Heart left ventricle (tissue), 16 donors: ENCODE measurements at regions of chr13 and their contacts with region 1.

Region 1: GRCh38 chr13:101109005-101109404 is 307.3 kb downstream of the NALCN start:
- DNase-seq: no peak
- ATAC-seq: no peak
- H3K4me3 ChIP-seq: no peak overlapping the region
- H3K27ac ChIP-seq: no peak overlapping the region
- H3K4me1 ChIP-seq: no peaks in the 10 kb centered on the region
- H3K27me3 ChIP-seq: no peaks in the 10 kb centered on the region
- CTCF ChIP-seq: no peak
- POLR2A ChIP-seq: no peak

Region 2: GRCh38 chr13:99661791-99662190 is 1447.2 kb before region 1 on chr13:
- intact Hi-C with region 1: loop called in 4 of 10 experiments (anchors 10 kb)
- DNase-seq: no peak
- ATAC-seq: no peak
- H3K4me3 ChIP-seq: no peak overlapping the region
- H3K27ac ChIP-seq: no peak overlapping the region
- H3K4me1 ChIP-seq: peaks cover 0 to 23% (median 8%) of the 10 kb centered on the region in 12 donors
- H3K27me3 ChIP-seq: peaks cover 0 to 10% (median 0%) of the 10 kb centered on the region in 9 donors
- CTCF ChIP-seq: no peak
- POLR2A ChIP-seq: no peak

Region 3: DNA sequence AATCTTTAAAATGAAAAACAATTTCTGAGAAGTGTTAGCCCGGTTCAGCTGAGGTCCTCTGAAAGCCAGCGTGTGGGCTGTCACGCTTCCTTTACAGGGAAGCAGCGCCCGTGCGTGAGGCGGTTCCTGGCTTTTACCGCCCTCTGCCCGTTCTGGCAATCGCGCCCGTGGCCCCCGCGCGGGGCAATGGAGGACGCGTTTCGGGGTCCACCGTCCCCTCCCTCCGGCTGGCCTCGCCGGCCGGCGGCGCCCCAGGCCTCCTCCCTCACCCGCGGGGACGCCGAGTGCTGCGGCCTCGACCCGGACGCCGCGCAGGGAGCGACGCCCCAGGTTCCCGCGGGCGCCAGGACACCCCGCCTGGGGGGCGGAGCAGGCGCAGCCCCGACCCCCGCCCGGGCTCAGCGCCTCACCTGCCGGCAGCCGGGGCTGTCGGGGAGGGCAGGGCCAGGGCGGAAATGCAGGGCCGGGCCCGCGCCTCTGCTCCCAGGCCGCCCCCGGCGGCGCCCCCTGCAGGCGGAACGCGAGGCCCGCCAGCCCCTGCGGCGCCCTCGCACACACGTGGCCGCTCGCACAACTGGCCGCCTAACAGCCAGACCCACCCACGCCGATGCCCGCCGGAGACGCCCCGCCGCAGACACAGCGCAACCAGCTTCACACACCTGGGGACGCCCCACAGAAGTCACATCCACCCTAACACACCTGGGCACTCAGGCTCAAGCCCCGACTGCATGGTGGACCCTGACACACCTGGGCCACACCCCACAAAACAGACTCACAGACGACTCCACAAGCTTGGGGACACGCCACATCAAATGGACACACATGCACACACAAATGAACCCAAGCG is 520.5 kb before region 1 on chr13 and contains the start of gene GGACT:
- intact Hi-C with region 1: loop called in 1 of 10 experiments (anchors 5 kb)
- DNase-seq: peak; percentile 66 to 90 (median 72)
- ATAC-seq: peak; percentile 73 to 98 (median 93)
- H3K4me3 ChIP-seq: peak within 1 kb of the TSS; percentile 57 to 81 (median 69)
- H3K27ac ChIP-seq: peak within 1 kb of the TSS; percentile 30 to 88 (median 68)
- H3K4me1 ChIP-seq: peaks cover 0 to 18% (median 5%) of the 10 kb centered on the region in 12 donors
- H3K27me3 ChIP-seq: no peaks in the 10 kb centered on the region
- CTCF ChIP-seq: peak; percentile 49 to 84 (median 69)
- POLR2A ChIP-seq: no peak
- total RNA-seq, gene GGACT: 1.00 to 3.9 (median 1.4) TPM

Region 4: DNA sequence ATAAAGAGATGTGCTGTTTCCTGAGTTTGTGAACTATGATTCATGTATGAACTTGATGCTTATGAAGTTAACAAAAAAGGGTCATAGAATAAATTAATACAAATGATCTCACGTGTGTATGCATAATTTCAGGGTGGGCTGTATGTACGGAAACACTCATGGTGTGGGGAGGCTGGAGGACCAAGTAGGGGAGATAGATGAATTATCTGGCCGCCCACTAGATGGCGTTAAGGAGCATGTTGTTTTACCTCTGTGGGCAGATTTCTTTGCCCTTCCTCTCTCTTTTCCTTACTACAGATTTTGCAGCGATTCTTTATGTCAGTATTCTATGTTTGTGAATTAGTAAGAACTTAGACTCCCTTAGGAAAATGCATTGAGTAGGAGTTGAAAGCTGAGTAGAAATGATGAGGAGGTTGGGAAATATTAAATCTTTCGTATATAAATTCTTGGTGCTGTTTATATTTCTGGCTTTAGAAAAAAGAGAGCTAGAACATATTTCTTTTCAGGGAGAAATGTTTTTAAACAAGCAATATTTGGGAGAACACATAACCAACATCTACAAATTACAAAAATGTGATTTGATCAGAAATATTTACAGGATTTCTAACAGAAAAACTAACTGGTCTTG is 387.0 kb before region 1 on chr13:
- intact Hi-C with region 1: loop called in 4 of 10 experiments (anchors 10 kb)
- DNase-seq: peak in 1 of 5 donors; percentile 17
- ATAC-seq: peak in 1 of 4 donors; percentile 41
- H3K4me3 ChIP-seq: no peak overlapping the region
- H3K27ac ChIP-seq: no peak overlapping the region
- H3K4me1 ChIP-seq: no peaks in the 10 kb centered on the region
- H3K27me3 ChIP-seq: peaks cover 0 to 10% (median 4%) of the 10 kb centered on the region in 9 donors
- CTCF ChIP-seq: peak; percentile 39 to 72 (median 60)
- POLR2A ChIP-seq: no peak

Region 5: DNA sequence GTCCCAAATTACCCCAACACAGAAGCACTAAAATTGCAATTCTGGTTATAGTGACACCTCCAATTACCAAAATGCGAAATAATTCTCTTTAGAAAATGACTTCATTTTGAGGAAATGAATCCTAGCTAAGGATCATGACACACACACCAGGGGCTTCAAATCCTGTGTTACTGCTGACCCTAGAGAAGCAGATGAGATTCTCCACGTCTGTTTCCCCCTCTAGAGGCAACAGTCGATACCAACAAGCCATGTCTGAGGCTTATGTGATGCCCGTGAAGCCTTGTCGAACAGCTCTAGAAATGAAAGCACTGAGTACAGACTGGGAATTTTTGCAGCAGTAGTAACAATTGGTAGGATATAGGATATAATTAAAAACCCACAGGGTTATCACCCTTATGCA is 280.8 kb before region 1 on chr13:
- intact Hi-C with region 1: no loop called
- DNase-seq: no peak
- ATAC-seq: no peak
- H3K4me3 ChIP-seq: no peak overlapping the region
- H3K27ac ChIP-seq: no peak overlapping the region
- H3K4me1 ChIP-seq: no peaks in the 10 kb centered on the region
- H3K27me3 ChIP-seq: no peaks in the 10 kb centered on the region
- CTCF ChIP-seq: no peak
- POLR2A ChIP-seq: no peak

Region 6: GRCh38 chr13:101763191-101763590 is 654.2 kb after region 1 on chr13:
- intact Hi-C with region 1: no loop called
- DNase-seq: no peak
- ATAC-seq: no peak
- H3K4me3 ChIP-seq: no peak overlapping the region
- H3K27ac ChIP-seq: no peak overlapping the region
- H3K4me1 ChIP-seq: no peaks in the 10 kb centered on the region
- H3K27me3 ChIP-seq: no peaks in the 10 kb centered on the region
- CTCF ChIP-seq: no peak
- POLR2A ChIP-seq: no peak